Activated CD4-positive, alpha-beta T cell treated with anti-CD3 and anti-CD28 coated beads for 36 hours (primary cell): ENCODE measurements at regions of chr17 and their contacts with region 1.

Region 1: GRCh38 chr17:5065227-5065744 is 13.0 kb upstream of the ZFP3 start:
- DNase-seq: no peak
- ATAC-seq: no peak
- H3K4me3 Mint-ChIP-seq: no peak overlapping the region
- H3K27ac Mint-ChIP-seq: no peak overlapping the region
- H3K4me1 Mint-ChIP-seq: peaks cover 3% of the 10 kb centered on the region
- H3K27me3 Mint-ChIP-seq: no peaks in the 10 kb centered on the region

Region 2: DNA sequence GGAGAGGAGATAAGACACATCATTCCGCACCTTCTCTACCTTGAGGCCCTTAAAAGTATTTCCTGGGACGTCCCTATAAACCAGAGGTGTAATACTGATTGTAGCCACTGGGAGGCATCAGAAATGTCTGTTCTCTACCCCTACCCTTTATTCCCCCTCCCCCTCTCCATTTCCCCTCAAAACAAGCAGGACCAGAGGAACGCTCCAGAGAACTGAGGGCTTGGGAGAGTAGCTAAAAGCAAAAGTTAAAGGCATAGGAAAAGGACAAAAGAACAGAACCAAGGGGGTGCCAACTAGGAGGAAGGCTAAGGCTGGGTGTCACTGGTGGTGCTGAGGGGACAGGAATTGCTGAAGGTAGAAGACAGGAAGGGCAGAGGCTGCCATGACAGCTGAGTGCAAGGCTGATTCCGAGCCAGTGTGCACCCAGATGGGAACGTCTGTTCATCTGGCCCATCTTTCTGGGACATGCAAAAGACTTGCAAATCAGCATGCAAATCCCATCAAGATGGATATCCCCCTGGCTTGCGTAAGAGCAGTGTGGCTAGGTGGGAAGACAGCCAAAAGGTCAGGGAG is 84.6 kb before region 1 on chr17:
- CTCF ChIA-PET with region 1: interaction called, 11 read pairs
- POLR2A ChIA-PET with region 1: no interaction called
- intact Hi-C with region 1: loop called (anchors 1 kb)
- DNase-seq: peak; percentile 57
- ATAC-seq: peak; percentile 94
- H3K4me3 Mint-ChIP-seq: no peak overlapping the region
- H3K27ac Mint-ChIP-seq: peak overlapping the region; percentile 69
- H3K4me1 Mint-ChIP-seq: peaks cover 23% of the 10 kb centered on the region
- H3K27me3 Mint-ChIP-seq: no peaks in the 10 kb centered on the region

Region 3: GRCh38 chr17:4997302-4998026 is 67.8 kb before region 1 on chr17 and contains the starts of genes INCA1 and KIF1C:
- CTCF ChIA-PET with region 1: no interaction called
- POLR2A ChIA-PET with region 1: no interaction called
- intact Hi-C with region 1: no loop called
- DNase-seq: peak; percentile 96
- ATAC-seq: peak; percentile 95
- H3K4me3 Mint-ChIP-seq: peak within 1 kb of the TSS; percentile 80
- H3K27ac Mint-ChIP-seq: peak within 1 kb of the TSS; percentile 55
- H3K4me1 Mint-ChIP-seq: peaks cover 20% of the 10 kb centered on the region
- H3K27me3 Mint-ChIP-seq: no peaks in the 10 kb centered on the region
- total RNA-seq, gene INCA1: 0.18 to 0.28 TPM
- total RNA-seq, gene KIF1C: 32.6 to 43.0 TPM

Region 4: DNA sequence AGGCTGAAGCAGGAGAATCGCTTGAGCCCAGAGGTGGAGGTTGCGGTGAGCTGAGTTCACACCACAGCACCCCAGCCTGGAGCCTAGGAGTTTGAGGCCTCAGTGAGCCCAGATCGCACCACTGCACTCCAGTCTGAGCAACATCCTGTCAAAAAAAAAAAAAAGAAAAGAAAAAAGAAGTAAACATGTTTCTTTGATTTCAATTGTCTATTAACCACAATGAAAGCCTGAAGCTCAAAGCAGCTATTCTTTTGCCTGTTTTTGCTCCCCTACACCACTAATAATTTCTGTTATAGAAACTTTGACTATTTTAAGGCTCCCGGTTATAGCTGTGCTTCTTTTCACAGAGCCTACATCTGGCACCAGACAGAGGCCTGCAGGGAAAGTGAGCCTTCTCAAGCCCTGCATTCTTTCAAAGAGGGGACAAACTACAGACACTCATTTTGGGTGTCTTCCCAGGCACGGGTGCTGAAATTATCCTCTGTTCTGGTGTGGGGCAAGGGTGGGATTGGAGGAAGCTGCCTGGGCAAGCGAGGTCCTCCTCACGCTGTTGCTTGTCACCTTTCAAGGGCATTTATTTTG is 15.9 kb before region 1 on chr17:
- CTCF ChIA-PET with region 1: interaction called, 17 read pairs
- POLR2A ChIA-PET with region 1: no interaction called
- intact Hi-C with region 1: no loop called
- DNase-seq: peak; percentile 70
- ATAC-seq: peak; percentile 87
- H3K4me3 Mint-ChIP-seq: no peak overlapping the region
- H3K27ac Mint-ChIP-seq: peak overlapping the region; percentile 81
- H3K4me1 Mint-ChIP-seq: peaks cover 44% of the 10 kb centered on the region
- H3K27me3 Mint-ChIP-seq: no peaks in the 10 kb centered on the region

Region 5: DNA sequence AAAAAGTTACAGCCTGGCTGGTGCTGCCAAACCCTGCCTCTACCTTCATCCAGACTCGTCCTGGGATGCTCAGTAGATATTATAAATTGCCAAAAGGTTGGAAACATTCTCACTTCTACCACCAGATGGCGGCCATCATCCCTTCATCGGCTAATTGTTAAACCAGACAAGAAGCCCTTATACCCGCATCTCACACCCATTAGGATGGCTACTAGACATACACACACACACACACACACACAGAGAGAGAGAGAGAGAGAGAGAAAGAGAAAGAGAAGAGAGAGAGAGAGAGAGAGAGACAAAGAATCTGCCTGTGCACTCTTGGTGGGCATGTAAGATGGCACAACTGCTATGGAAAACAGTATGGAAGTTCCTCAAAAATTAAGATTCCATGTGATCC is 184.3 kb after region 1 on chr17:
- CTCF ChIA-PET with region 1: no interaction called
- POLR2A ChIA-PET with region 1: no interaction called
- intact Hi-C with region 1: no loop called
- DNase-seq: peak; percentile 80
- ATAC-seq: peak; percentile 91
- H3K4me3 Mint-ChIP-seq: no peak overlapping the region
- H3K27ac Mint-ChIP-seq: no peak overlapping the region
- H3K4me1 Mint-ChIP-seq: peaks cover 8% of the 10 kb centered on the region
- H3K27me3 Mint-ChIP-seq: no peaks in the 10 kb centered on the region